Mammary epithelial cell (primary cell): ENCODE measurements at regions of chr1 and their contacts with region 1.

Region 1: GRCh38 chr1:186393476-186393875 is 17.8 kb downstream of the ODR4 start:
- DNase-seq: no peak
- H3K4me3 ChIP-seq: no peak overlapping the region
- H3K27ac ChIP-seq: no peak overlapping the region
- H3K4me1 ChIP-seq: no peaks in the 10 kb centered on the region
- H3K27me3 ChIP-seq: no peaks in the 10 kb centered on the region
- CTCF ChIP-seq: no peak

Region 2: GRCh38 chr1:186340772-186341171 is 52.7 kb before region 1 on chr1:
- CTCF ChIA-PET with region 1: no interaction called
- dilution Hi-C with region 1: no loop called
- in situ Hi-C with region 1: no loop called
- intact Hi-C with region 1: loop called (anchors 1 kb)
- DNase-seq: no peak
- H3K4me3 ChIP-seq: no peak overlapping the region
- H3K27ac ChIP-seq: no peak overlapping the region
- H3K4me1 ChIP-seq: no peaks in the 10 kb centered on the region
- H3K27me3 ChIP-seq: no peaks in the 10 kb centered on the region
- CTCF ChIP-seq: no peak